Mammary epithelial cell (primary cell): ENCODE measurements at regions of chr17 and their contacts with region 1.

Region 1: GRCh38 chr17:57849874-57850754 is at the start of gene MRPS23:
- DNase-seq: peak; percentile 99
- H3K4me3 ChIP-seq: peak within 1 kb of the TSS; percentile 80 to 98 (median 86)
- H3K27ac ChIP-seq: peak within 1 kb of the TSS; percentile 73
- H3K4me1 ChIP-seq: peaks cover 15% of the 10 kb centered on the region
- H3K27me3 ChIP-seq: no peaks in the 10 kb centered on the region
- CTCF ChIP-seq: no peak
- total RNA-seq, gene MRPS23: 17.7 to 48.4 TPM

Region 2: DNA sequence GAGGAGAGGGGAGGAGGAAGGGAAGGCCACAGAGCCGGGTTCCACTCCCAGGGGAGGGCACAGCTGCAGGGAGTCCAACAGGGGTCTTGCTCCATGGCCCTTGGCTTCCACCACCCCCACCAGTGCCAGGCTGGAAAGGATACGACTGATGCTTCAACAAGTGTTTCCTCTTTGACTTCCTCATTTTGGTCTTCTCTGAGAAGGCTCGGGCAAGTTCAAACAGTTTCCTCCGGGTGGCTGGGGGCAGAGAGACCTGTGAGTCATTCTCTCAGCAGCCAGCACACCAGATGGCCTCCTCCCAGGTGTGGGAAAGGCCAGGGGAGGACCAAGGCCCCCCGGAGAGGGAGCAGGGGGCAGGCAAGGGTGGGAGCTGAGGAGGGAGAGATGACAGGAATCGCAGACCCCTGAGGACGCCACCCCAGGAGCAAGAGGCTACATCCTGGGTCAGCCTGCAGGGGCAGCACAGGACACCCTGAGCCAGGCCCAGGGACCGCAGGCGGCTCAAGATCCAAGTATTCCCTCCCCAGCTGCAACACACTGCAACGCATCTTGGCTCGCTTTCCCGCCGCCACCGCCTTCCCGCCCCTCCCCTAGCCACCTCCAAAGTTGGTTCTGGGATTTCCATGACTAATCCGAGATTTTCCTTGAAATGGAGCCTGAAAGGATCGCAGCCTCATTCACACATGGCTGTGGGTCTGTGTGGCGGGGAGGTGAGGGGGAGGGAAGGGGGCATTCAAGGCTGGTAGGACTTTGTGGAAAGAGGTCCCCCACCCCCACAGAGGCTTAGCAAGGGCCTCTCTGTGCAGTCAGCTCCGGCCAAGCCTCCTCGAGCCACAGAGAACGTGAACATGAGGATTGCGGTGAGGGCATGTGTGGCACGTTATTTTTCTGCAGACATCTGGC is 18.1 kb after region 1 on chr17:
- CTCF ChIA-PET with region 1: no interaction called
- dilution Hi-C with region 1: no loop called
- in situ Hi-C with region 1: no loop called
- intact Hi-C with region 1: loop called (anchors 2 kb)
- DNase-seq: peak; percentile 92
- H3K4me3 ChIP-seq: peak overlapping the region in 1 of 3 experiments; percentile 23
- H3K27ac ChIP-seq: peak overlapping the region; percentile 64
- H3K4me1 ChIP-seq: peaks cover 39% of the 10 kb centered on the region
- H3K27me3 ChIP-seq: no peaks in the 10 kb centered on the region
- CTCF ChIP-seq: peak; percentile 19 to 46

Region 3: DNA sequence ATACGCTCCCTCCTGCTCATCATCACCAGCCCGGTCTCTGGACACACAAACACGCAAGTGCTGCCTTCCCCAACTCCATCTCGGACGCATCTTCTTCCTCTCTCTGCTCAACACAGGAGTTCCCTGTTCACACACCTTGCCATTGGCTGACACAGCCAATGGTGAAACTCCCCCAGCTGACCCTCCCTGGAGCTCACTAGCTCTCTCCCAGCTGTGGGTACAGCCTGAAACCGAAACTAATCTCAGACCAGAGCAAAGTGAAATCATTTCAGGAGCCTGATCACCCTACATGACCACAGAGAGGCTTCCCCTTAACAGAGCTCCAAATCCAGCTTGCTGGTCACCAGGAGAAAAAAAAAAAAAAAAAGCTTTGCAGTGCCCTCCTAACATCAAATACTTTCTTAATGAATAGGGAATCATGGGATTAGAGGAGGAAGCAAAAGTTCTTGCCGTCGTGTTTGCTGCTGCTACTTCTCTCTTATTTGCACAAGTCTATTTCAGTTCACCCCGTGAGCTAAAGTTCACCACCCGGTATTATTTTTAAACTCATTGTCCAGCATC is 96.8 kb after region 1 on chr17:
- CTCF ChIA-PET with region 1: no interaction called
- dilution Hi-C with region 1: no loop called
- in situ Hi-C with region 1: no loop called
- intact Hi-C with region 1: loop called (anchors 2 kb)
- DNase-seq: peak; percentile 69
- H3K4me3 ChIP-seq: no peak overlapping the region
- H3K27ac ChIP-seq: no peak overlapping the region
- H3K4me1 ChIP-seq: peaks cover 39% of the 10 kb centered on the region
- H3K27me3 ChIP-seq: no peaks in the 10 kb centered on the region
- CTCF ChIP-seq: no peak

Region 4: DNA sequence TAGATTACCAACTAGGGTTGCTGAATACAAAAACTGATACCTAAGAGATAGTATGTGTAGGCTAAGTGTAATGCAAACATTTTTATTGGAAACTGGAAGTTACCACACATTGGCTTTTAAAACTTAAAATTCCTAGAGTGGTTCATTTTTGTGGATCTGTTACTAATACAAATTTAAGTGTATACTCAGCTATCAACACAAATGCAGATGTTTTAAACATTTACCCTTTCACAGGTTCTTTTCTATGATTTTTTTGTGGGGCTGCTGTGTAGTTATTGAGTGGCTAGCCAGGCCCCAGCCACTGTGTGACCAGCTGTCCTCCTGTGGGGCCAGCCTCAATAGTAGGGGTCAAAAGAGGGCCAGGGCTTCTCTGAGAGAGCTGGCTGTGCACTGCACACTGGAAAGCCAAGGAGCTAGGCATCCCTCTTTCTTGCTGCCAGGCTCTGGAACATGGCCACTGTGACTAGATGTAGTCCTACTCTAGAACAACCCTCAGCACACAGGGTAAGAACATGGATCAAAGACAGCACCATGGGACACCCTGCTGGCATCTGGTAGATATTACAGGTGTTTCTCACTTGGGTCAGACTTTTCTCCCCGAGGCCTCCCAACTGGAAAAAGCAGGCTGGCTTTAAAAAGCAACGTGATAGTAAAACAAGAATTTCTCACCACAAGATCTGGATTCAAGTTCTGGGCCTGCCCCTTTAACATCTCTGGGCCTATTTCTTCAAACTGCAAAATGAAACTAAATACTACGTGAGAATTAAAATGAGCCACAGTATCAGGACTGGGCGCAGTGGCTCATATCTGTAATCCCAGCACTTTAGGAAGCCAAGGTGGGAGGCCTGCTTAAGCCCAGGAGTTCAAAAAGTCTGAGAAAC is 145.2 kb after region 1 on chr17:
- CTCF ChIA-PET with region 1: no interaction called
- dilution Hi-C with region 1: loop called (anchors 5 kb)
- in situ Hi-C with region 1: loop called (anchors 5 kb)
- intact Hi-C with region 1: no loop called
- DNase-seq: peak; percentile 61
- H3K4me3 ChIP-seq: no peak overlapping the region
- H3K27ac ChIP-seq: no peak overlapping the region
- H3K4me1 ChIP-seq: no peaks in the 10 kb centered on the region
- H3K27me3 ChIP-seq: no peaks in the 10 kb centered on the region
- CTCF ChIP-seq: peak; percentile 69 to 81

Region 5: DNA sequence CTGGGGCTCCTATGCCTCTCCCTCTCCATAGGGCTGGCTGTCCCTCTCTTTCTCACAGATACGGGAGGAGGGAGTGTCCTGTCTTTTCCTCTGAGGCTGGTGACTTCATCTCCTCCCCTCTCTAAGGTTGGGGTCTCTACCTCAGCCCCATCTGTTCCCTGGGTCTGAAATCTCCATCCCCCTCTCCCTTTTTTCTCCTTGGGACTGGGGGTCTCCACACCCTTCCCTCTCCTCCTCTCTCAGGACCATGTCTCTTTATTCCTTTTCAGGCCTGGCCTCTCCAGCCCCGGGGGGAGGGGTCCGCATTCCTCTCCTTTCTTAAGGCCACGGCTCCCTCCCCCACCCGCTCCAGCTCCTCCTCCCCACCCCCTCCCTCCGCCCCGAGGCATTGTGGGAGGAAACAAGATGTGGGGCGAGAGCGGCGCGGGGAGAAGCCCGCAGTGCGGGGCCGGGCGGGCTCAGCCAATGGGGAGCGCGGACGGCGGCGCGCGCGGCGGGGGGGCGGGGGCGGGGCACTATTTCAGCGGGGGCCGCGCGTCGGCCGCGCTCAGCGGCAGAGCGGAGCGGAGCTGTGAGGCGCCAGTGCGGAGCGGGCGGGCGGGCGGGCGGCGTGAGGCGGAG is 232.9 kb after region 1 on chr17 and contains the start of gene DYNLL2:
- CTCF ChIA-PET with region 1: no interaction called
- dilution Hi-C with region 1: no loop called
- in situ Hi-C with region 1: loop called in 1 of 2 experiments (anchors 25 kb)
- intact Hi-C with region 1: no loop called
- DNase-seq: peak; percentile 61
- H3K4me3 ChIP-seq: peak within 1 kb of the TSS; percentile 70 to 90 (median 84)
- H3K27ac ChIP-seq: peak within 1 kb of the TSS; percentile 16
- H3K4me1 ChIP-seq: peaks cover 10% of the 10 kb centered on the region
- H3K27me3 ChIP-seq: no peaks in the 10 kb centered on the region
- CTCF ChIP-seq: no peak
- total RNA-seq, gene DYNLL2: 12.8 to 27.6 TPM